Heart right ventricle (tissue), 16 donors: ENCODE measurements at regions of chr3 and their contacts with region 1.

Region 1: GRCh38 chr3:29605845-29606244 is 325.0 kb downstream of the RBMS3 start:
- DNase-seq: no peak
- ATAC-seq: peak in 1 of 8 donors; percentile 20
- H3K4me3 ChIP-seq: no peak overlapping the region
- H3K27ac ChIP-seq: no peak overlapping the region
- H3K4me1 ChIP-seq: peaks cover 0 to 37% (median 8%) of the 10 kb centered on the region in 9 donors
- H3K27me3 ChIP-seq: no peaks in the 10 kb centered on the region
- CTCF ChIP-seq: no peak

Region 2: GRCh38 chr3:29544696-29545363 is 61.0 kb before region 1 on chr3:
- intact Hi-C with region 1: loop called in 1 of 10 experiments (anchors 10 kb)
- DNase-seq: no peak
- ATAC-seq: no peak
- H3K4me3 ChIP-seq: no peak overlapping the region
- H3K27ac ChIP-seq: no peak overlapping the region
- H3K4me1 ChIP-seq: peaks cover 0 to 15% (median 4%) of the 10 kb centered on the region in 9 donors
- H3K27me3 ChIP-seq: no peaks in the 10 kb centered on the region
- CTCF ChIP-seq: no peak

Region 3: GRCh38 chr3:30793740-30794139 is 1187.9 kb after region 1 on chr3:
- intact Hi-C with region 1: no loop called
- DNase-seq: no peak
- ATAC-seq: no peak
- H3K4me3 ChIP-seq: no peak overlapping the region
- H3K27ac ChIP-seq: no peak overlapping the region
- H3K4me1 ChIP-seq: no peaks in the 10 kb centered on the region
- H3K27me3 ChIP-seq: no peaks in the 10 kb centered on the region
- CTCF ChIP-seq: no peak